Common myeloid progenitor, CD34-positive (primary cell): ENCODE measurements at regions of chr15 and their contacts with region 1.

Region 1: GRCh38 chr15:88904624-88905327 is 8.4 kb downstream of the MFGE8 start:
- DNase-seq: peak; percentile 70 to 83 (median 79)
- H3K4me3 ChIP-seq: no peak overlapping the region
- H3K27ac ChIP-seq: no peak overlapping the region
- H3K4me1 ChIP-seq: peaks cover 0 to 7% (median 5%) of the 10 kb centered on the region in 4 experiments
- H3K27me3 ChIP-seq: no peaks in the 10 kb centered on the region

Region 2: DNA sequence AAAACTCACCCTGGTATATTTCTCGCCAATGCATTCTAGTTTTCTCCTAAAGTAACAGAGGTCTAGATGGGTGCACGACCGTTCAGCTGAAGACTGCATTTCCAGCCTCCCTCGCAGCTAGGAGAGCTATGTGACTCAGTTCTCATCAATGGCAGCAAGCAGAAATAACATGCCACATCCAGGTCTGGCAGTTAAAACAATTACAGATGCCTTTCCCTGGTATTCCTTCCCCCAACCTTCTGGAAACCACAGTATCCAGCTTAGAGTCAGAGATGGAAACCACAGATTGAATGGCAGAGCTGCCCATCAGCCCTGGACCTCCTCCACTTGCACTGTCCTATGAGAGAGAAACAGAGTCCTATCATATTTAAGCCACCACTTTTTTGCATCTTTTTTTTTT is 14.3 kb before region 1 on chr15:
- CTCF ChIA-PET with region 1: interaction called, 10 read pairs
- POLR2A ChIA-PET with region 1: no interaction called
- DNase-seq: no peak
- H3K4me3 ChIP-seq: no peak overlapping the region
- H3K27ac ChIP-seq: no peak overlapping the region
- H3K4me1 ChIP-seq: peaks cover 0 to 16% (median 12%) of the 10 kb centered on the region in 4 experiments
- H3K27me3 ChIP-seq: peaks cover 2 to 16% (median 6%) of the 10 kb centered on the region in 5 experiments

Region 3: DNA sequence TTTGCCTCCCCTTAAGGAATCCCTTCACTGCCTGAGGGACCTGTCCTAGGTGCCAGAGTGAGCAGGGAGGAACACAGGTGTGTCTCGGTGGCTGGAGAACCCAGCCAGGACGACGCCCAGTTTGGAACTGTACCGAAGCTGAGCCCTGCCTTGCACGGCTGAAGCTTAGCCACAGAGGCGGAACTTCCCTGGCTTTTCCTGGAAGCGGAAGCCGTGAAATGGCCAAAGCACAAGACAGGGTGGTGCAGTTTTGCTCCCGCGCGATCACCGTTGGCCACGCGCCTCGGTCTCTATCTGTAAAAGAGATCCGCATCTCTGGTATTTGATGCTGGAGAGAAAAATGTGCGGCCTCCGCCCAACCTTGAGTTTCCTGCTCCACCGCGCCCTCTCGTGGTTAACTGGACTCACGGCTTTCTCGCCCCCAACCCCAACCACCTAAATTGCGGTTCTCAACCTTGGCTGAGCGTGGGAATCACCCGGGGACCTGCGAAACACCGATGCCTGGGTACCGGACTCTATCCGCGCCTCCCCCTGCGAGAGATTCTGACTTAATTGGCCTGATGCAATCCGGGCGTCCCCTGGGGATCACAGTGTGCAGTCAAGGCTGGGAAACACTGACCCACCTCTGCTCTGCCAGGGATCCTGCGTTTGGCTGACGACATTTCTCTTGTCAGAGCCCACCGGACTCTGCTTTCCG is 112.7 kb after region 1 on chr15:
- CTCF ChIA-PET with region 1: interaction called, 18 read pairs
- POLR2A ChIA-PET with region 1: no interaction called
- DNase-seq: peak; percentile 76 to 88 (median 87)
- H3K4me3 ChIP-seq: peak overlapping the region in 5 of 7 experiments; percentile 20 to 67 (median 54)
- H3K27ac ChIP-seq: no peak overlapping the region
- H3K4me1 ChIP-seq: peaks cover 2 to 52% (median 40%) of the 10 kb centered on the region in 4 experiments
- H3K27me3 ChIP-seq: no peaks in the 10 kb centered on the region

Region 4: DNA sequence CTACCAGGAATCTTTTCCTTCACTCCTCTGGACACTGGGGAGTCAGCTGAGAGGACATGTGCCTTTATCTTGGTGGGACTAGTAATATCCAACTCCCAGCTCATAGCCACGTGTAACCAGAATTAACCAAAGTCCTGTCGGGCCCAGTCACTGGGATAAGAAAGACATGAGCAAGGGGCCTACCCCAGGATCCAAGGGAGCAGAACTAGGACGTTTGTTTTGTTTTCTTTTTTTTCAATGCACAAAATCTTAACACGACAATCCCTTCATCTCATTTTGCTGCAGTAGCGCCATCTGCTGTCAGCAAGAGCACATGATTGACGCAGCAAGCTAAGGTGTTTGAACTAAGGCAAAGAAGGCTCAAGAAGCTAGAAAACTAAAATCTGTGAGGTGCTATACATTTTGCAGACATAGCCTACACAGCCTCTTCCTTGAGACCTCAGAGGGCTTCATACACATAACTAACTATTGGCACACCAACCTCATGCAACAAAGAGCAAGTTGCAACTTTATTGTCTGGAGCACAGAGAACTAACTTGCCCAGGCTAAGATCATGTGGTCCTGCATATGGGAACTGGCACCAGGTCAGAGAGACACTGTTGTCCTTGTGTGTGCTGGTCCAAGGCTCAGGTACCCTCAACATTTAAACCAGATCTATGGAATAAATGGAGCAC is 273.0 kb after region 1 on chr15:
- CTCF ChIA-PET with region 1: interaction called, 23 read pairs
- POLR2A ChIA-PET with region 1: no interaction called
- DNase-seq: peak; percentile 79 to 91 (median 85)
- H3K4me3 ChIP-seq: no peak overlapping the region
- H3K27ac ChIP-seq: no peak overlapping the region
- H3K4me1 ChIP-seq: peaks cover 0 to 6% (median 0%) of the 10 kb centered on the region in 4 experiments
- H3K27me3 ChIP-seq: no peaks in the 10 kb centered on the region